GM10248 (cell line): ENCODE measurements at regions of chr16 and their contacts with region 1.

Region 1: GRCh38 chr16:68328151-68328859 is 17.5 kb downstream of the PRMT7 start:
- DNase-seq: peak; percentile 86
- CTCF ChIP-seq: peak; percentile 90

Region 2: DNA sequence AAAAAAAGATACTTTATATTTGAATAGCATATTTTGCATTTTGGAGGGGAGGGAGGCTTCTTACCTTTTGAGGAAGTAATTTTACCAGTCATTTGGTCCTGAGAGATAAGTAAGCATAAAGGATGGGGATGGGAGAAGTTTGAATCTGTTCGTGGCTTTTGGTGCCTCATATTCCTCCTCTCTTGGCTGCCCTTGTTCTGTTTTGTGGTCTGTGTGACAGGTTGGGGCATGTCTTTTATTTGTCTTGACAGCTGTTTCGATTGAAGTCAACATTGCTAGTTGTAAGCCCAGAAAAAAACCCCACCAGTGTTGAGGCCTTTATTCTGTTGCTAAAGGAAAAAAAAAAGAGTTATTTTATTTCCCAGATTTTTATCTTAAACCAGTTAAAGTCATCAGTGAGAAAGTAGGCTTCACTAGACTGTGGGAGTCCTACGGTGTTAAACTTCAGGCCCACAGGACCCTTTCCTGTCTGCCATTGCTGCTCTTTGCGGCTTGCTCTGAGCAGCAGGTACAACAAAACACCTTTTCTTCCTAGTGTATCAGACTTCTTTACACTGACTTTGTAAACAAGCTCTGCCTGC is 52.6 kb before region 1 on chr16:
- CTCF ChIA-PET with region 1: interaction called, 15 read pairs
- POLR2A ChIA-PET with region 1: no interaction called
- DNase-seq: peak; percentile 64
- CTCF ChIP-seq: no peak

Region 3: GRCh38 chr16:68298907-68299561 is 29.3 kb before region 1 on chr16:
- CTCF ChIA-PET with region 1: interaction called, 21 read pairs
- POLR2A ChIA-PET with region 1: no interaction called
- DNase-seq: no peak
- CTCF ChIP-seq: no peak

Region 4: DNA sequence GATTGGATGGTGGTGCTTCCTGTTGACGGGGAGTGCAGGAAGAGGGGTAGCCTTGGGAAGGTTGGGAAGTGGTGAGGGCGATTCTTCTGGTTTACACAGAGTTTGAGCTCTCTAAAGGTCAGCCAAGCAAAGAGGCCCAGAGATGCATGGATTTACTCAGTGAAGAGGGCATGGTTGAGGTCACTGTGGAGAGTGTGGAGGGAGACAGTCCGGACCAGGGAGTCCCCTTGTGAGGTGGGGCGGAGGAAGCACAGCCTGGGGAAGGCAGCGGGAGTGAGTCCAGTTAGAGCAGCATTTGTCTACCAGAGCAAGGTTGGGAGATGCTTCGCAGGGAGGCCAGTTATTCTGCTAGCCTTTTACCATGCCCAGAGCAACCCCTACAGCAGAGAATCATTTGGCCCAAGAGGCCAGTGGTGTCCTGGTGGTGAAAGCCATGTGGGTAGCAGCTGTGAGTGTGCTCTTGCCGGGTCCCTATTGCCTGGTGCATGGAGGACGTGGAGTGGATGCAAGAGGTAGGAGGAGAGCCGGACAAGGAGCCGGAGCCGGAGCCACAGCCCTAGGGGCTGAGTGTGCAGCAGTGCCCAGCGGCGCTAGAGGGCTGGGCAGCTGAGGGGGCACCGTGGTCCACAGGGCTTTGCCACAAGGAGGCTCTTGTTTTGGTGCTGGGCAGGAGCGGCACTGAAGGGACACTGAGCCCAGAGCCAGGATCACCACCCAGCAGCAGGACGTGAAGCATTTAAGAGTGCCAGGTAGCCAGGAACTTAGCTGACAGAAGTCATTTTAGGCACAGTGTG is 10.2 kb after region 1 on chr16:
- CTCF ChIA-PET with region 1: interaction called, 32 read pairs
- POLR2A ChIA-PET with region 1: no interaction called
- DNase-seq: no peak
- CTCF ChIP-seq: no peak

Region 5: DNA sequence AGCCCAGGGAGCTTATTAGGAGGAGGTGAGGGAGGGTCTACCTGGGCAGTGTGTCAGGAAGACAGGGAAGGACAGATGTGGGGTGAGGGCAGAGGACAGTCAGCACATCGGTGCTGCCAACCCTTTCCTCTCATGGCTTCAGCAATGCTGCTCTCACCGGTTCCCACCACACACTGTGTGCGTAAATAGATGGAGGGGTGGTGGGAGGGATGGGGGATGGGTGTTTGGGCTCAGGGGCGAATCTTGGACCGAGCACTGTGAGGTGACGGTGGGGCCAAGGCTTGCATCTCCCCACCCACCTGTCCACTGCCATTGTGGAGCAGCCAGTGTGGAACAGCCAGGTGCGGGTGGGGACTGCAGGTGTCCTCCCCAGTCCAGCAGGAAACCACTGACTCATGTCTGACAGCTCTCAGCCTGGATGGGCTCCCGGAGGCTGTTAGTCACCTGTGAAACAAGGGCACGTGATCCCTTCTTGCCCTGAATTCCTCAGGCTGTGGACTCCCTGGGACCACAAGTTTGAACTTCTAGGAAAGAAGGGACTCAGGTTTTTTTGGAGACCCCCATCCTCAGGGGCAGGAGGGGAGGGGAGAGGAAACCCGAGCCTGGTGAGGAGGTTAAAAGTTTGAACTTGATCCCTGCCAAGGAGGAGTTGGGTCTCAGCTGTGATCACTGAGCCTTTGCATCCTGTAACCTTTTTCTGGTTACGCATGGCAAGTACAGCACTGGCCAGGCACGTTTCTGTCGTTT is 162.7 kb after region 1 on chr16:
- CTCF ChIA-PET with region 1: no interaction called
- POLR2A ChIA-PET with region 1: no interaction called
- DNase-seq: no peak
- CTCF ChIP-seq: no peak